Calu3 (cell line): ENCODE measurements at regions of chr2 and their contacts with region 1.

Region 1: GRCh38 chr2:54704688-54705605 is 18.5 kb upstream of the EML6 start:
- DNase-seq: no peak
- H3K4me3 Mint-ChIP-seq: no peak overlapping the region
- H3K27ac Mint-ChIP-seq: no peak overlapping the region
- H3K4me1 Mint-ChIP-seq: no peaks in the 10 kb centered on the region
- H3K27me3 Mint-ChIP-seq: peaks cover 3% of the 10 kb centered on the region
- CTCF ChIP-seq: peak; percentile 30

Region 2: GRCh38 chr2:54106631-54107454 is 598.1 kb before region 1 on chr2:
- CTCF ChIA-PET with region 1: interaction called, 21 read pairs
- intact Hi-C with region 1: loop called (anchors 2 kb)
- DNase-seq: peak; percentile 62
- H3K4me3 Mint-ChIP-seq: no peak overlapping the region
- H3K27ac Mint-ChIP-seq: no peak overlapping the region
- H3K4me1 Mint-ChIP-seq: peaks cover 10% of the 10 kb centered on the region
- H3K27me3 Mint-ChIP-seq: no peaks in the 10 kb centered on the region
- CTCF ChIP-seq: peak; percentile 38

Region 3: GRCh38 chr2:54176577-54176976 is 528.4 kb before region 1 on chr2:
- CTCF ChIA-PET with region 1: interaction called, 4 read pairs
- intact Hi-C with region 1: loop called (anchors 5 kb)
- DNase-seq: peak; percentile 42
- H3K4me3 Mint-ChIP-seq: no peak overlapping the region
- H3K27ac Mint-ChIP-seq: no peak overlapping the region
- H3K4me1 Mint-ChIP-seq: no peaks in the 10 kb centered on the region
- H3K27me3 Mint-ChIP-seq: no peaks in the 10 kb centered on the region
- CTCF ChIP-seq: no peak

Region 4: GRCh38 chr2:54522624-54523281 is 182.2 kb before region 1 on chr2:
- CTCF ChIA-PET with region 1: interaction called, 23 read pairs
- intact Hi-C with region 1: loop called (anchors 1 kb)
- DNase-seq: peak; percentile 82
- H3K4me3 Mint-ChIP-seq: peak overlapping the region; percentile 43
- H3K27ac Mint-ChIP-seq: peak overlapping the region; percentile 92
- H3K4me1 Mint-ChIP-seq: peaks cover 69% of the 10 kb centered on the region
- H3K27me3 Mint-ChIP-seq: no peaks in the 10 kb centered on the region
- CTCF ChIP-seq: peak; percentile 59

Region 5: DNA sequence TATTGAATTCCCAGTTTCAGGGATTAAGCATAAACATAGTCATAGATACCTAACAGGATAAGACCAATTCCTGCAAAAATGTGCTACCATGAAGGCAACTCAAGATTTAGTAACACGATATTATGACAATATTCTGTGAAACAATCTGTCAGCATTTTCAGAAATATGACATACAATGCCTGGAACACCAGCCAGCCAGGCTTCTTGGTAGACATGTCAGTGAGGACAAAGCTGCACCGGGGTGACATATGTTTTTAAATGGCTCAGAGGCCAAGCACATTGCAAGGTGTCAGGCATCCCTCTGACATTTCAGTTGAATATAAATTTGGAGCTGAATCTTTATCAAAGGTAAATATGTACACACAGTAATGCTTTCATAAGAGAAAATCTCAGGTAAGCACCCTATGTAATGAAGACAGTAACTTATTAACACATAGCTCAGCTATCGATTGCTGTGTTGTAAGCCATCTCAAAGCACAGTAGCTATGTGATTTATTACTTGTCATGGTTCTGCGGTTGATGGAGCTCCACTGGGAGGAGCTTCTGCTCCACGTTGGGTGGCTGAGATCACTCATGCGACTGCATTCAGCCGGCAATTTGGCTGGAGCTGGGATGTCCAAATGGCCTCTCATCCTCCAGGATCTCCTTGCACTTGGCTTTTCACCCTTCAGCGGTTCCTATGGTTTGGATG is 13.4 kb before region 1 on chr2:
- CTCF ChIA-PET with region 1: interaction called, 12 read pairs
- intact Hi-C with region 1: no loop called
- DNase-seq: peak; percentile 69
- H3K4me3 Mint-ChIP-seq: no peak overlapping the region
- H3K27ac Mint-ChIP-seq: no peak overlapping the region
- H3K4me1 Mint-ChIP-seq: peaks cover 11% of the 10 kb centered on the region
- H3K27me3 Mint-ChIP-seq: no peaks in the 10 kb centered on the region
- CTCF ChIP-seq: no peak